Head of caudate nucleus (tissue), 42 donors: ENCODE measurements at regions of chr6 and their contacts with region 1.

Region 1: GRCh38 chr6:16332175-16332542 is 93.8 kb downstream of the GMPR start:
- DNase-seq: peak; percentile 49 to 96 (median 88)

Region 2: DNA sequence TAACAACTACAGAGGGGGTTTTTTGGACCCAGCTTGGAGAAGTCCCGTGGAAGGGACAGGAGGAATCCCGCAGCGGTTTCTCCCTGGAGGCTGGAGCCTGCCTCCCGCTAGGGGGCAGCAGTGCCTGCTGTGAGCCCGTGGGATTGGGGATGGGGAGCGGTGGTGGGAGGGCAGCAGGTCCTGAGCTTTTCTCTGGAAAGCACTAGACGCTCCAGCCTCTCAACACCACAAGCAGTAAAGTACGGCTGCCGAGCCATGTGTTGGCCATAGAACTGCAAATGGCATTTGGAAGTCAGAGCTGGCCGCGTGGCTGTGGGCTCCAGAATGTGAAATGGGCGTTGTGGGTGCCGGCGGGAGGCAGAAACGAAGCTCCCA is 46.0 kb before region 1 on chr6:
- intact Hi-C with region 1: loop called (anchors 5 kb)
- DNase-seq: peak; percentile 46 to 92 (median 79)

Region 3: GRCh38 chr6:16409531-16410441 is 77.6 kb after region 1 on chr6:
- intact Hi-C with region 1: loop called (anchors 2 kb)
- DNase-seq: peak; percentile 35 to 87 (median 70)

Region 4: DNA sequence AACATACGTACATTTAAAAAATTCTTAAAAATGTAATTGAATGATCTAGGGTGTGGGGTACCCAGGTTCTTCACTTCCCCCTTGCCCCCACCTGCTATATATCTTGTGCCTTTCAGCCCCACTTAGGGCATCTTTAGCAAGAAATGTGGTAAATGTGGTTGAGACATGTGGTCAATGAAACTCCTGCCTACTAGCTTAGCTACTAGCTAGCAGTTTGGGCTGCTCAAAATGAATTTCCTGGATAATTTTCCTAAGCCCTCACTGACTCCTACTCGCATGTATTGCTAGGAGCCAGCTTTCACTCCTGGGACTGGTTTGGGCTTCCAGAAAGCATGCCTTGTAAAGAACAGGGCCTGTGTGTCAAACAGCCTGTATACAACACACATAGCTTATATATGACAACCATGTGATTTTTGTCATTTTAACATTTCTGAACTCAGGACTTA is 171.8 kb after region 1 on chr6:
- intact Hi-C with region 1: loop called (anchors 10 kb)
- DNase-seq: no peak

Region 5: GRCh38 chr6:16761471-16762267 is 429.5 kb after region 1 on chr6:
- intact Hi-C with region 1: loop called (anchors 5 kb)
- DNase-seq: peak; percentile 66 to 94 (median 80)